Panc1 (cell line): ENCODE measurements at regions of chr4 and their contacts with region 1.

Region 1: GRCh38 chr4:169079942-169080827 is 70.1 kb upstream of the CBR4 start:
- DNase-seq: no peak
- ATAC-seq: peak; percentile 84
- H3K4me3 ChIP-seq: no peak overlapping the region
- H3K27ac ChIP-seq: peak overlapping the region; percentile 61
- H3K4me1 ChIP-seq: peaks cover 15% of the 10 kb centered on the region
- H3K27me3 ChIP-seq: no peaks in the 10 kb centered on the region
- CTCF ChIP-seq: no peak

Region 2: GRCh38 chr4:169010125-169011023 is 69.8 kb before region 1 on chr4 and contains the start of gene CBR4:
- CTCF ChIA-PET with region 1: no interaction called
- POLR2A ChIA-PET with region 1: interaction called, 13 read pairs
- in situ Hi-C with region 1: no loop called
- intact Hi-C with region 1: no loop called
- DNase-seq: peak; percentile 86
- ATAC-seq: peak; percentile 99
- H3K4me3 ChIP-seq: peak within 1 kb of the TSS; percentile 74 to 87
- H3K27ac ChIP-seq: peak within 1 kb of the TSS; percentile 89
- H3K4me1 ChIP-seq: peaks cover 11% of the 10 kb centered on the region; the same call in 1 of the 2 replicates
- H3K27me3 ChIP-seq: no peaks in the 10 kb centered on the region
- CTCF ChIP-seq: peak; percentile 32; the same call in 1 of the 2 replicates
- total RNA-seq, gene CBR4: 13.5 TPM

Region 3: DNA sequence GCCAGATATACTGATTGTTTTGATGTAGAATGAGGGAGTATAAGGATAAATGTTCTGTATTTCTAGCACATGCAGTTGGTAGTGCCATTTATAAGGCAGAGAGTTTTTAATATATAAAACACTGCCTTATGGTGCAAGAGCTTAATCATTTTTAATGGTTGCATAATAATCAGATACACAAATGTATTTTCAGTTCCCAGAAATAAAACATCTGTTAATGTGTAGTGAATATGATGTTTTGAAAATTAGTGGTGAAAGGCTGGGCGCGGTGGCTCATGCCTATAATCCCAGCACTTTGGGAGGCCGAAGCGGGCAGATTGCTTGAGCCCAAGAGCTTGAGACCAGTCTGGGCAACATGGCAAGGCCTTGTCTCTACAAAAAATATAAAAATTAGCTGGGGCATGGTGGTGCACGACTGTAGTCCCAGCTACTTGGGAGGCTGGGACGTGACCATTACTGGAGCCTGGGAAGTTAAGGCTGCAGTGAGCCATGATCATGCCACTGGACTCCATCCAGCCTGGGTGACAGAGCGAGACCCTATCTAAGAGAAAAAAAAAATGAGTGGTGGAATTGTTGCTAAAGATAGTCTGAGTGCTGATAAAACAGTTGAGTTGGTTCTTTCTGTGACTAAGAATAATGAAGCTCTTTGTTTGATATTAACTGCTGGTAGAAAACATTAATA is 569.5 kb after region 1 on chr4:
- CTCF ChIA-PET with region 1: no interaction called
- POLR2A ChIA-PET with region 1: no interaction called
- in situ Hi-C with region 1: no loop called
- intact Hi-C with region 1: no loop called
- DNase-seq: no peak
- ATAC-seq: no peak
- H3K4me3 ChIP-seq: no peak overlapping the region
- H3K27ac ChIP-seq: no peak overlapping the region
- H3K4me1 ChIP-seq: no peaks in the 10 kb centered on the region
- H3K27me3 ChIP-seq: no peaks in the 10 kb centered on the region
- CTCF ChIP-seq: no peak